CD8-positive, alpha-beta T cell (primary cell): ENCODE measurements at regions of chr12 and their contacts with region 1.

Region 1: GRCh38 chr12:89352492-89353187 is at the start of gene DUSP6:
- DNase-seq: peak; percentile 55 to 91 (median 76)
- ATAC-seq: peak; percentile 71
- H3K4me3 ChIP-seq: peak within 1 kb of the TSS; percentile 54 to 74
- H3K4me3 Mint-ChIP-seq: peak within 1 kb of the TSS; percentile 91
- H3K27ac ChIP-seq: peak within 1 kb of the TSS; percentile 45 to 55
- H3K27ac Mint-ChIP-seq: peak within 1 kb of the TSS; percentile 88
- H3K4me1 ChIP-seq: peaks cover 24% of the 10 kb centered on the region
- H3K4me1 Mint-ChIP-seq: peaks cover 43% of the 10 kb centered on the region
- H3K27me3 ChIP-seq: no peaks in the 10 kb centered on the region
- H3K27me3 Mint-ChIP-seq: peaks cover 3% of the 10 kb centered on the region
- CTCF ChIP-seq: no peak
- total RNA-seq, gene DUSP6: 3.0 to 3.9 TPM

Region 2: GRCh38 chr12:88035271-88035906 is 1317.3 kb before region 1 on chr12:
- CTCF ChIA-PET with region 1: no interaction called
- POLR2A ChIA-PET with region 1: no interaction called
- intact Hi-C with region 1: loop called in 1 of 2 experiments (anchors 2 kb)
- DNase-seq: peak; percentile 65 to 91 (median 85)
- ATAC-seq: peak; percentile 97
- H3K4me3 ChIP-seq: peak overlapping the region; percentile 75 to 85
- H3K4me3 Mint-ChIP-seq: peak overlapping the region; percentile 96
- H3K27ac ChIP-seq: peak overlapping the region; percentile 67 to 73
- H3K27ac Mint-ChIP-seq: peak overlapping the region; percentile 96
- H3K4me1 ChIP-seq: peaks cover 23% of the 10 kb centered on the region
- H3K4me1 Mint-ChIP-seq: peaks cover 55% of the 10 kb centered on the region
- H3K27me3 ChIP-seq: no peaks in the 10 kb centered on the region
- H3K27me3 Mint-ChIP-seq: no peaks in the 10 kb centered on the region
- CTCF ChIP-seq: no peak

Region 3: GRCh38 chr12:88141770-88142609 is 1210.7 kb before region 1 on chr12 and contains the starts of genes CEP290 and TMTC3:
- CTCF ChIA-PET with region 1: no interaction called
- POLR2A ChIA-PET with region 1: no interaction called
- intact Hi-C with region 1: loop called in 1 of 2 experiments (anchors 5 kb)
- DNase-seq: peak; percentile 81 to 99 (median 90)
- ATAC-seq: peak; percentile 92
- H3K4me3 ChIP-seq: peak within 1 kb of the TSS; percentile 82 to 84
- H3K4me3 Mint-ChIP-seq: peak within 1 kb of the TSS; percentile 99
- H3K27ac ChIP-seq: peak within 1 kb of the TSS; percentile 75 to 85
- H3K27ac Mint-ChIP-seq: peak within 1 kb of the TSS; percentile 97
- H3K4me1 ChIP-seq: peaks cover 18% of the 10 kb centered on the region
- H3K4me1 Mint-ChIP-seq: peaks cover 48% of the 10 kb centered on the region
- H3K27me3 ChIP-seq: no peaks in the 10 kb centered on the region
- H3K27me3 Mint-ChIP-seq: no peaks in the 10 kb centered on the region
- CTCF ChIP-seq: no peak
- total RNA-seq, gene CEP290: 7.7 to 10.7 TPM
- total RNA-seq, gene TMTC3: 3.9 to 4.4 TPM

Region 4: GRCh38 chr12:89051065-89051677 is 301.5 kb before region 1 on chr12:
- CTCF ChIA-PET with region 1: interaction called, 4 read pairs
- POLR2A ChIA-PET with region 1: no interaction called
- intact Hi-C with region 1: loop called (anchors 5 to 10 kb)
- DNase-seq: peak in 3 of 9 experiments; percentile 19 to 72 (median 64)
- ATAC-seq: peak; percentile 70
- H3K4me3 ChIP-seq: no peak overlapping the region
- H3K4me3 Mint-ChIP-seq: no peak overlapping the region
- H3K27ac ChIP-seq: no peak overlapping the region
- H3K27ac Mint-ChIP-seq: no peak overlapping the region
- H3K4me1 ChIP-seq: no peaks in the 10 kb centered on the region
- H3K4me1 Mint-ChIP-seq: no peaks in the 10 kb centered on the region
- H3K27me3 ChIP-seq: no peaks in the 10 kb centered on the region
- H3K27me3 Mint-ChIP-seq: no peaks in the 10 kb centered on the region
- CTCF ChIP-seq: peak; percentile 90

Region 5: GRCh38 chr12:89244536-89244935 is 108.1 kb before region 1 on chr12:
- CTCF ChIA-PET with region 1: no interaction called
- POLR2A ChIA-PET with region 1: interaction called, 8 read pairs
- intact Hi-C with region 1: loop called in 1 of 2 experiments (anchors 5 kb)
- DNase-seq: peak in 4 of 9 experiments; percentile 4 to 54 (median 23)
- ATAC-seq: peak; percentile 70
- H3K4me3 ChIP-seq: peak overlapping the region in 1 of 2 experiments; percentile 5
- H3K4me3 Mint-ChIP-seq: peak overlapping the region; percentile 61
- H3K27ac ChIP-seq: no peak overlapping the region
- H3K27ac Mint-ChIP-seq: peak overlapping the region; percentile 75
- H3K4me1 ChIP-seq: peaks cover 29% of the 10 kb centered on the region
- H3K4me1 Mint-ChIP-seq: peaks cover 32% of the 10 kb centered on the region
- H3K27me3 ChIP-seq: no peaks in the 10 kb centered on the region
- H3K27me3 Mint-ChIP-seq: peaks cover 8% of the 10 kb centered on the region
- CTCF ChIP-seq: no peak

Region 6: DNA sequence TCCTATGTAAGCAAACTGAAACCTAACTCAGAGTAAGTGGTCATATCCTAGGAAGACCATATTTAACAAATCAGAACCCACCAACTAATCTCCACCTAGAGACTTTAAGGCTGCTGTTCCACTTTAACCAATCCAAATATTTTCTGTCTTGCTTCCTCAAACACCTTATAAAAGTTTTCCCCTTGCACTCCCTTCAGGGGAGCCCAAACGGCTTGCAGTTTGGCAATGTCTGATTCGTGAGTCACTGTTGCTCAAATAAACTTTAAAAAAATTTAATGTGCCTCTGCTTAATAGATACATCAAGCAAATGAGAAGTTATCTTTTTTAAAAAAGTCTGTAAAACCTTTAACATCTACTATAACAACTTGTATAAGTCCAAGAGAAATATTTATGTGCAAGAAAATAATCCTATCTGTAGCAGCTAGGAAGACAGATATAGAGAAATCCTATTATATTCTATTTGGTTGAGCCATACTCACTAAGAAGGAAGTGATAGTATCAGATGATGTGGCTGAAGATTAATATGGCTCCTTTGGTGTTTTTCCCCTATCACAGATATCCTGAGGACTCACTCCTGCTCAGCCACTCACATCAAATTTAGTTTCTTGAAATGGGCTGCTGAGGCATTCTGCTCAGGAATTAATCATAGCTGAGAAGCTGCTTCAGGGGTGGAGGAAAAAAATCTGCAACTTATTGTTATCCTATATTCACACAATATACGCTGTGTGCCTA is 64.8 kb after region 1 on chr12:
- CTCF ChIA-PET with region 1: no interaction called
- POLR2A ChIA-PET with region 1: no interaction called
- intact Hi-C with region 1: no loop called
- DNase-seq: no peak
- ATAC-seq: no peak
- H3K4me3 ChIP-seq: no peak overlapping the region
- H3K4me3 Mint-ChIP-seq: no peak overlapping the region
- H3K27ac ChIP-seq: no peak overlapping the region
- H3K27ac Mint-ChIP-seq: no peak overlapping the region
- H3K4me1 ChIP-seq: no peaks in the 10 kb centered on the region
- H3K4me1 Mint-ChIP-seq: no peaks in the 10 kb centered on the region
- H3K27me3 ChIP-seq: no peaks in the 10 kb centered on the region
- H3K27me3 Mint-ChIP-seq: no peaks in the 10 kb centered on the region
- CTCF ChIP-seq: no peak

Region 7: GRCh38 chr12:89524541-89525285 is 172.1 kb after region 1 on chr12 and contains the start of gene GALNT4:
- CTCF ChIA-PET with region 1: interaction called, 4 read pairs
- POLR2A ChIA-PET with region 1: interaction called, 3 read pairs
- intact Hi-C with region 1: loop called (anchors 2 to 5 kb)
- DNase-seq: peak; percentile 45 to 88 (median 74)
- ATAC-seq: peak; percentile 70
- H3K4me3 ChIP-seq: peak within 1 kb of the TSS; percentile 78 to 93
- H3K4me3 Mint-ChIP-seq: peak within 1 kb of the TSS; percentile 92
- H3K27ac ChIP-seq: peak within 1 kb of the TSS; percentile 70 to 86
- H3K27ac Mint-ChIP-seq: peak within 1 kb of the TSS; percentile 87
- H3K4me1 ChIP-seq: peaks cover 28% of the 10 kb centered on the region
- H3K4me1 Mint-ChIP-seq: peaks cover 61% of the 10 kb centered on the region
- H3K27me3 ChIP-seq: no peaks in the 10 kb centered on the region
- H3K27me3 Mint-ChIP-seq: no peaks in the 10 kb centered on the region
- CTCF ChIP-seq: peak; percentile 41
- total RNA-seq, gene GALNT4: 4.6 to 5.3 TPM

Region 8: DNA sequence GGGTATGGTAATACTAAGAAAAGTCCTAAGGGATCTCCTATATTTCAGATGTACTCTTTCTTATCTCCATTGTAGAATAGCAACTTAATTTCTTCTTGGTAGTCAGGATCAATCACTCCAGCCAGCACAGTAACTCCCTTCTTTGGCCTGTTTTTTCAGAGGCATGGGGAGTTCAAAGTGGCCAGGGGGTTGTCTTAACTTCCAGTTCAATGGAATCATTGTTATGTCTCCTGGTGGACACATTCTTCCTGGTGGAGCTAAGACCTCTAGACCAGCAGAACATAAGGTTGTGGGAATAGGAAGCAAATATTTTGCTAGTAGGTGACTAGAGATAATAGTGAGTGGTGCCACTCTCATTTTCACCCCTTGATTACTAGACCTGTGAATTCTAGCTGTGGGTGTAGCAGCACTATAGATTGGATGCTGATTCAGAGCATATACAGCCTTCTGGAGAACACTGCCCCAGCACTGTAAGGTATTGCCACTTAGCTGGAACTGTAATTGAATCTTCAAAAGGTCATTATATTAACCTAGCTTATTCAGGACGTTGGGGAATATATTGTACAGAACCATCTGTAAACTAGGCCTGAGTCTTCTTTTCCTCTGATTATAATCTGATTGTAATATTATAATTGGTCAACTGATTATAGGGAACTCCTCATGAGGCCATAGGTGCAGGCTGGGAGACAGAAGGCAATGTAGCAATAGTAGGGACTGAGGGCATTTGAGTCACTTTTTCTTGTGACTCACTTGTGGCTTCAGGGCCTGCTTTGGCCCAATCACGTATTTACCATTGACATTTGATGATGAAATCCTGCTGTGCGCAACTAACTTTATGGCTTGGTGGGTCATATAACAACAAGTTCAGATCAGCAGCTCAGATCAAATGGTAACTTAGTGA is 416.2 kb after region 1 on chr12:
- CTCF ChIA-PET with region 1: no interaction called
- POLR2A ChIA-PET with region 1: no interaction called
- intact Hi-C with region 1: loop called in 1 of 2 experiments (anchors 10 kb)
- DNase-seq: peak in 1 of 9 experiments; percentile 41
- ATAC-seq: no peak
- H3K4me3 ChIP-seq: no peak overlapping the region
- H3K4me3 Mint-ChIP-seq: no peak overlapping the region
- H3K27ac ChIP-seq: no peak overlapping the region
- H3K27ac Mint-ChIP-seq: no peak overlapping the region
- H3K4me1 ChIP-seq: peaks cover 9% of the 10 kb centered on the region
- H3K4me1 Mint-ChIP-seq: peaks cover 35% of the 10 kb centered on the region
- H3K27me3 ChIP-seq: no peaks in the 10 kb centered on the region
- H3K27me3 Mint-ChIP-seq: no peaks in the 10 kb centered on the region
- CTCF ChIP-seq: no peak